ENCODE measurements at regions of chr16 and their contacts with region 1.

Region 1: DNA sequence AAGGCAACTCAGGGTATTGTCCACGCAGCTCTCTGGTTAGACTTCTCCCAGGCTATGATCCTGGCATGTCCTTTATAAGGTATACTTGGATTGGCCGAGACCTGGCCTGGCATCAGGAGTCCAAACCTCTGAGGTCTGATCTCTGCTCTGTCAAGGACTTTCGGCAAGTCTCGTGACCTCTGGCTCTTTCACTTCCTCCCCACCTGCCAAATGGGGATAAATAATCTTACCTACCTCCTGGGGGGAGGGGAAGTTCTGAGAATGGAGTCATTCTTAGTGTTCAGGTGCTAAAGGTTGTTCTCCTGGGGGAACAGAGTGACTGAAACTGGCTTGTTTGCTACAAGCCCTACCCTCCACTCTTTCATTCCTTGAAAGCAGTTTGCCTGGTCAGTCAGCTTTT is 7.6 kb downstream of the ATXN1L start:
- DNase-seq: no peak
- ATAC-seq: peak; percentile 88
- H3K4me3 ChIP-seq: peak overlapping the region; percentile 17
- H3K27ac ChIP-seq: peak overlapping the region; percentile 86
- H3K4me1 ChIP-seq: peaks cover 32% of the 10 kb centered on the region
- H3K27me3 ChIP-seq: no peaks in the 10 kb centered on the region
- CTCF ChIP-seq: no peak
- EP300 ChIP-seq: peak; percentile 27 to 66; a peak in 2 of 4 replicates
- POLR2A ChIP-seq: no peak
- RAD21 ChIP-seq: 0 out of 2 replicates have a peak, but pooled peaks have one; percentile 4

Region 2: GRCh38 chr16:71870818-71871217 is 17.4 kb after region 1 on chr16:
- CTCF ChIA-PET with region 1: interaction called, 11 read pairs
- POLR2A ChIA-PET with region 1: interaction called, 5 read pairs
- RAD21 ChIA-PET with region 1: no interaction called
- SMC1A ChIA-PET with region 1: interaction called, 6 read pairs
- in situ Hi-C with region 1: no loop called
- intact Hi-C with region 1: no loop called
- DNase-seq: no peak
- ATAC-seq: peak; percentile 44
- H3K4me3 ChIP-seq: no peak overlapping the region
- H3K27ac ChIP-seq: no peak overlapping the region
- H3K4me1 ChIP-seq: peaks cover 14% of the 10 kb centered on the region
- H3K27me3 ChIP-seq: no peaks in the 10 kb centered on the region
- CTCF ChIP-seq: no peak
- EP300 ChIP-seq: no peak
- POLR2A ChIP-seq: no peak
- RAD21 ChIP-seq: no peak

Region 3: GRCh38 chr16:72008424-72009216 is 155.2 kb after region 1 on chr16 and contains the start of gene DHODH:
- CTCF ChIA-PET with region 1: no interaction called
- POLR2A ChIA-PET with region 1: no interaction called
- RAD21 ChIA-PET with region 1: no interaction called
- SMC1A ChIA-PET with region 1: no interaction called
- in situ Hi-C with region 1: no loop called
- intact Hi-C with region 1: no loop called
- DNase-seq: peak; percentile 93
- ATAC-seq: peak; percentile 99
- H3K4me3 ChIP-seq: peak within 1 kb of the TSS; percentile 99
- H3K27ac ChIP-seq: peak within 1 kb of the TSS; percentile 77
- H3K4me1 ChIP-seq: 0 out of 2 replicates have a peak, but pooled peaks cover 2% of the 10 kb centered on the region
- H3K27me3 ChIP-seq: no peaks in the 10 kb centered on the region
- CTCF ChIP-seq: peak in 2 of 3 experiments; percentile 19 to 20; a peak in 1 of 6 replicates
- EP300 ChIP-seq: peak in 1 of 2 experiments; percentile 47; a peak in 1 of 4 replicates
- POLR2A ChIP-seq: peak; percentile 96
- RAD21 ChIP-seq: no peak
- polyA plus RNA-seq, gene DHODH: 3.4 to 4.1 TPM

Measured in GM12878 (cell line).